Gastrocnemius medialis (tissue), 4 donors: ENCODE measurements at regions of chr19 and their contacts with region 1.

Region 1: DNA sequence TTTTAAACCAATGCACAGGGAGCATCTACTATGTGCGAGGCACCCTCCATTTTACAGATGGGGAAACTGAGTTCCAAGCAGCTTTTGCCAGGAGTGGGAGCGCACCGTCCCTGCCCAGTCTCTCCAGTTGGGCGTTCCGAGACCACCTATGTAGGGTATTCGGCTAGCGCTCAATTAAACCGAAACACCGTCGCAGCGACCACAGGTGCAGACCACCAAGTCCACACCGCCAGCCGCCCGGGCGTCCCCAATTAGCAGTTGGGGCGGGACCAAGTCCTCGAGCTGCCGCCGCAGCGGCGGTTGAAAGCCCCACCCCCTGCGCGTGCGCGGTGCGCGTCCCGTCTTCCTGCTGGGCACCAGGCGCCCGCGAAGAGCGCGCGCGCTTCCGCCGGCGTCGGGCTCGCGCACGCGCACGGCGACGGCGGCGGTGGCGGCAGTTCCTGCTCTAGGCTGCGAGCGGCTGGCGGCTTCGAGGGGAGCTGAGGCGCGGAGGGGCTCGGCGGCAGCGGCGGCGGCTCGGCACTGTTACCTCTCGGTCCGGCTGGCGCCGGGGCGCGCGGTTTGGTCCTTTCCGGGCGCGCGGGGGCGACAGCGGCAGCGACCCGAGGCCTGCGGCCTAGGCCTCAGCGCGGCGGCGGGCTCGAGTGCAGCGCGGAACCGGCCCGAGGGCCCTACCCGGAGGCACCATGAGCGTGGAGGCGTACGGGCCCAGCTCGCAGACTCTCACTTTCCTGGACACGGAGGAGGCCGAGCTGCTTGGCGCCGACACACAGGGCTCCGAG is at the start of gene UPF1:
- DNase-seq: peak; percentile 86 to 87
- ATAC-seq: peak; percentile 91 to 95
- H3K4me3 ChIP-seq: peak within 1 kb of the TSS; percentile 78 to 96 (median 83)
- H3K27ac ChIP-seq: peak within 1 kb of the TSS; percentile 77 to 94 (median 86)
- H3K4me1 ChIP-seq: peaks cover 28 to 38% of the 10 kb centered on the region in 2 donors
- H3K27me3 ChIP-seq: peaks cover 0 to 6% (median 0%) of the 10 kb centered on the region in 3 donors
- CTCF ChIP-seq: peak in 3 of 5 experiments; percentile 20 to 49 (median 23)
- POLR2A ChIP-seq: peak; percentile 78 to 90
- total RNA-seq, gene UPF1: 26.0 to 64.9 (median 46.4) TPM

Region 2: DNA sequence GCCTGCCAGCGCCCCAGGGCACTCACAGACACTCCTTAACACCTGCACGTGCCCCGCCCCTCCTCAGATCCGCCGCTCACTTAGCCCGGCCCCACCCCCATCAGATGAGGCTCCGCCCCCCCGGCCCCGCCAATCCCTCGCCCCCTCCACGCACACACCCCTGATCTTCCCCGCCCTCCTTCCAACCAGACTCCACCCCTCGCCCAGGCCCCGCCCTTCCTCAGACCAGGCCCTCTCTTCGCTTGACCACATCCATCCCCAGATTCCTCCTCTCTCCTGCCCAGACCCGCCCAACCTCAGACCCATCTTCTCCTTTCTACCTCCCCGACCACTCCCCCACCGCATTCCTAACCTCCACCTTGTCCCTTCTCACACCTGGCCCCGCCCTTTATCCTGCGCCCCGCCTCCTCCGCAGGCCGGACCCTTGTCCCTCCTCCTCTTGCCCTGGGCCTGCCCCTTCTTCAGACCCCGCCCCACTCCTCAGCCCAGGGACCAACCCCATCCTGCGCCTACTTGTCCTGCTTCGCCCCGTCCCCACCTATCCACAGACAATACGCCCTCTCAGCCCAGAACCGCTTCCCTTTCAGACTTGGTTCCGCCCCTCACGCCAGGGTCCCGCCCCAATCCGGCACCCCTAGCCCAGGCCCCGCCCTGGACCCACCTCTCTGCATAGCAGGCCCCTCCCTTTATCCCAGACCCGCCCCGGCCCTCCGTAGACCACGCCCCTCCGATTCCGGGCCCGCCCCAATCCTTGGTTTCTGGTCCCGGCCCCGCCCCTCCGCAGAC is 195.3 kb before region 1 on chr19:
- in situ Hi-C with region 1: no loop called
- intact Hi-C with region 1: no loop called
- DNase-seq: peak; percentile 97 to 98
- ATAC-seq: peak; percentile 91
- H3K4me3 ChIP-seq: peak overlapping the region; percentile 59 to 99 (median 83)
- H3K27ac ChIP-seq: peak overlapping the region; percentile 85 to 98 (median 92)
- H3K4me1 ChIP-seq: peaks cover 12 to 17% of the 10 kb centered on the region in 2 donors
- H3K27me3 ChIP-seq: no peaks in the 10 kb centered on the region
- CTCF ChIP-seq: no peak
- POLR2A ChIP-seq: no peak

Region 3: GRCh38 chr19:18683213-18683939 is 148.3 kb before region 1 on chr19 and contains the start of gene CRTC1:
- in situ Hi-C with region 1: no loop called
- intact Hi-C with region 1: loop called (anchors 1 kb)
- DNase-seq: peak; percentile 76 to 87
- ATAC-seq: peak; percentile 91 to 93
- H3K4me3 ChIP-seq: peak within 1 kb of the TSS; percentile 52 to 65 (median 58)
- H3K27ac ChIP-seq: peak within 1 kb of the TSS; percentile 87 to 93 (median 90)
- H3K4me1 ChIP-seq: peaks cover 11 to 19% of the 10 kb centered on the region in 2 donors
- H3K27me3 ChIP-seq: no peaks in the 10 kb centered on the region
- CTCF ChIP-seq: no peak
- POLR2A ChIP-seq: peak; percentile 69 to 79
- total RNA-seq, gene CRTC1: 2.8 to 8.8 (median 3.7) TPM